ENCODE measurements at regions of chr22 and their contacts with region 1.

Region 1: DNA sequence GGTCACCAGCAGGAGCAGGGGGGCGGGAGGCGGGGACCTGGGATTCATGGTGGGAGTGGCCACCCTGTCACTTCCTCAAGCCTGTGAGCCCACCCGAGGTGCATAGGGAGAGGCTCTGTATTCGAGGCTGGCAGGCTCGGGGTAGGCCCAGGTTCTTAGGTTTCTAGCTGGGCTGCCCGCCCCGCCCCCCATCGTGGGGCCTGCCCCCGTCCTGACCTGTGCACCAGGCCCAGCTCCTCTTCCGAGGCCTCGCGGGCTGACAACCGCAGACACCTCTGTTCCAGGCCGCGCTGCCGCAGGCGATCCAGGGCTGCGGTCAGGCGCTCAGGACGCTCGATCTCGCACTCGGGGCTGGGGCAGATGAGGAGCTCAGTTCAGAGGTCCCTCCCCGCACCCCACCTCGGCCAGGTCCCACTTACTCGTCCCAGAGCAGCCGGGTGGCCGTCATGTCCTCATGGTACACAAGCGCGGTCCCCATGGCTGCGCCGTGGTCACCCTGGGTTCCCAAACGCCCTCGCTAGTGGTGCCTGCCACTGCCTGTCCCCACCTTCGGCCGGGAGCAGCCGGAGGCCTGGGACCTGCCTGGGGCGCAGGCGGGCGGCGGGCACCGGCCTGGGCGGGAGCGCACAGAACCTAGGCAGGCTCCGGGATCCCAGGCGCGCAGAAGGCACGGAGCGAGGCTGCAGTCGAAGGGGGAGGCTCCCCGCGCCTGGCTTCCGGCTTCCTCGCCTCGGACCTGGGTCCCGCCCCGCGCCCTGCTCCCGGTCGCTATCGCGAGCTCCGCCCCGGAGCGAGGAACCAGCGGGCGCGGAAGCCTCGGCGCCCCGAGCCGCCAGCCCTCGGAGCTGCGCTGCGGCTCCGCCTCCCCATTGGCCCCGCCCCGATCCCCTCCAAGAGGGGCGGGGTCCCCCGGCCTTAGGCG is at the start of gene HDAC10:
- DNase-seq: peak; percentile 72 to 83
- H3K4me3 ChIP-seq: peak within 1 kb of the TSS; percentile 84
- H3K27ac ChIP-seq: peak within 1 kb of the TSS; percentile 37
- H3K4me1 ChIP-seq: peaks cover 22% of the 10 kb centered on the region
- H3K27me3 ChIP-seq: no peaks in the 10 kb centered on the region
- CTCF ChIP-seq: 0 out of 2 replicates have a peak, but pooled peaks have one; percentile 19
- total RNA-seq, gene HDAC10: 80.5 and 101 TPM in 2 replicates

Region 2: DNA sequence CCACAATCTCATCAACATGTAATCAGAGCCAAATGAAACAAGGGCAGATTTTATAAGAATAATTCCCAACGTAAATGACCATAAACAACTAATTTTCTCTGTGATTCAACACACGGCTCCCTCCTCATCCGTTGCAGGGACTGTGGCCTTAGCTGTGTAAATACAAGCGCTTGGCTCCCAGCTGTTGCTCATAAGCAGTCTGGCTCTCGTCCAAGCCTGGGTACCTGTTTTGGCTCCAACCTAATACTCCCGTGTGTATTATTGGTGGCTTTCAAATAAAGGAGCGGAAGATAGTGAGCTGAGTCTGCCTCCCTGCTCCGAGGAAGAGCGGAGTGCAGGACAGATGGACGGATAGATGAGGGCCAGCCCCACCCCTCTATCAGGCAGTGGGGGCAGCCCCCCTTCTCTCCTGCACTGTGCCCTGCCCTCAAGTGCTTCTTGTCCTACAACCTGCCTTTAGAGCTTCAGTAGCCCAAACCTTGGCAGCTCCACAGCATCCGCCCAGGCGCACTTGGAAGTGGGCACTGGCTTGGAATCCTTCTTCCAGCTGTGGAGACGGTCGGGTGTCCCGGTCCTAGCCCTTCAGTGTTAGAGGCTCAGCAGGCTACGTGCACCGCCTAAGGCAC is 1094.0 kb before region 1 on chr22:
- CTCF ChIA-PET with region 1: no interaction called
- POLR2A ChIA-PET with region 1: no interaction called
- intact Hi-C with region 1: no loop called
- DNase-seq: no peak
- H3K4me3 ChIP-seq: no peak overlapping the region
- H3K27ac ChIP-seq: no peak overlapping the region
- H3K4me1 ChIP-seq: no peaks in the 10 kb centered on the region
- H3K27me3 ChIP-seq: peaks cover 98% of the 10 kb centered on the region
- CTCF ChIP-seq: no peak

Region 3: GRCh38 chr22:50169774-50170341 is 81.0 kb before region 1 on chr22:
- CTCF ChIA-PET with region 1: no interaction called
- POLR2A ChIA-PET with region 1: no interaction called
- intact Hi-C with region 1: no loop called
- DNase-seq: peak; percentile 46 to 62
- H3K4me3 ChIP-seq: peak overlapping the region; percentile 56; the same call in 1 of the 2 replicates
- H3K27ac ChIP-seq: no peak overlapping the region
- H3K4me1 ChIP-seq: peaks cover 13% of the 10 kb centered on the region
- H3K27me3 ChIP-seq: no peaks in the 10 kb centered on the region
- CTCF ChIP-seq: no peak

Region 4: GRCh38 chr22:50311606-50312351 is 61.0 kb after region 1 on chr22:
- CTCF ChIA-PET with region 1: no interaction called
- POLR2A ChIA-PET with region 1: no interaction called
- intact Hi-C with region 1: no loop called
- DNase-seq: no peak
- H3K4me3 ChIP-seq: no peak overlapping the region
- H3K27ac ChIP-seq: no peak overlapping the region
- H3K4me1 ChIP-seq: peaks cover 13% of the 10 kb centered on the region
- H3K27me3 ChIP-seq: no peaks in the 10 kb centered on the region
- CTCF ChIP-seq: no peak

Region 5: DNA sequence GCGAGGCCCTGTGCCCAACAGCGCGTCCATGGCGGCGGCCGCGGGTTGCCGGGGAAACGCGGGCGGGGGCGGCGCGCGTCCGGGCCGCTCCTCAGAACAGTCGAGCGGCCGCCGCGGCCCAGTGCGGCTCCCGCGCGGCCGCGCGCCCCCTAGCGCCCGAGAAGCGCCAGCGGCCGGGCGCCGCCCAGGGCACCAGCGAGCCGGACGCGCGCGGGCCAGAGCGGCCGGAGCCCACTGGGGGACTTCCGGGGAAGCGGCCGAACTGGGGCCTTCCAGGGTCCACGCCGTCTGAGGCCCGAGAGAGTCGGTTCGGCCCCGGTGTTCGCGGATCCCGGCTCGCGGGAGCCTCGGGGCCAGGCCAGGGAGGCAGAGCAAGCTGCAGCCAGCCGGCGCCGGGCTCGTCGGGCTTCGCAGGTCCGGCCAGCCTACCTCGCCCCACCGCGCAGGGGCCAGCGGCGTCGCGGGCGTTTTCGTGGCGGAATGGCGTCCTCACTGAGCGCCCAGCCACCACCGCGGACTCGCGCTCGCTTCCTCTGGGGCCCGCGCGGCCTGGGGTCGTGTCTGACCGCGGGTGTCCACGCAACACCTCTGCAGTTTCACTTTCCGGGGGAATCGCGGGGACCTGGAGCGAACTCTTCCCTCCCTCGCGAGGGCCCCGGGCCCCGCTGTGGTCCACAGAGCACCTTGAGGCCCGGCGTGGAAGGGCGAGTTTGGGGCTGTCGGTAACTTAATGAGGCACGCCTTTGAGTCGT is 76.3 kb after region 1 on chr22 and contains the start of gene DENND6B:
- CTCF ChIA-PET with region 1: no interaction called
- POLR2A ChIA-PET with region 1: no interaction called
- intact Hi-C with region 1: loop called (anchors 2 kb)
- DNase-seq: peak; percentile 62 to 80
- H3K4me3 ChIP-seq: peak within 1 kb of the TSS; percentile 92
- H3K27ac ChIP-seq: peak within 1 kb of the TSS; percentile 46
- H3K4me1 ChIP-seq: peaks cover 33% of the 10 kb centered on the region
- H3K27me3 ChIP-seq: no peaks in the 10 kb centered on the region
- CTCF ChIP-seq: peak; percentile 61
- total RNA-seq, gene DENND6B: 12.1 and 14.3 TPM in 2 replicates

Region 6: GRCh38 chr22:50361688-50362087 is 110.9 kb after region 1 on chr22:
- CTCF ChIA-PET with region 1: interaction called, 24 read pairs
- POLR2A ChIA-PET with region 1: no interaction called
- intact Hi-C with region 1: no loop called
- DNase-seq: no peak
- H3K4me3 ChIP-seq: no peak overlapping the region
- H3K27ac ChIP-seq: no peak overlapping the region
- H3K4me1 ChIP-seq: no peaks in the 10 kb centered on the region
- H3K27me3 ChIP-seq: no peaks in the 10 kb centered on the region
- CTCF ChIP-seq: no peak

Region 7: DNA sequence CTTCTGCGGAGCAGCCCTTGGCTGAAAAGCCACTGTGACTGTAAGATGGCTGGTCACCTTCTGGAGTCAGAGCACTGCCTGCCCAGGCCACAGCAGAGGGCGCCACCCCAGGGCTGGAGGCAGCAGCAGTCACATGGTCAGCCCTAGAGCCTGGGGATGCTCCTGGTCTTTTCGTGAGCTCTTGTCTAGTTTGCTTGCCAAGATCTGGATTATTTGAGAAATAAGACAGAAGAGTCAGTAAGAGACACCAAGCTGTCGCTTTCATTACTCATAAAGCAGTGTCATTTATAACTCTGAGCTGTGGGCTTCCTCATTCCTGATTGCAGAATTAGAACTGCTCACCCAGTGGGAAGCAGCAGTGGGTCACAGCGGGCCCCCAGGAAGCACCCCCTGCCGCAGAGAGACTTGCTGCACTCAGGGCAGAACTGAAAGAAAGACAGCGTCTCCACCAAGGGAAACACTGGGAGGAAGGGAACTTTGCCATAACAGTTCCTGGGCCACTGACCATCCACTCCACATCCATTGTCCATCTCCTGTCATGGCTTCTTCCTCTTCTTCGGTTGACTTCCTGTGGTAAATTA is 149.0 kb after region 1 on chr22:
- CTCF ChIA-PET with region 1: no interaction called
- POLR2A ChIA-PET with region 1: no interaction called
- intact Hi-C with region 1: no loop called
- DNase-seq: peak in 1 of 2 experiments; percentile 32
- H3K4me3 ChIP-seq: no peak overlapping the region
- H3K27ac ChIP-seq: no peak overlapping the region
- H3K4me1 ChIP-seq: peaks cover 5% of the 10 kb centered on the region; the same call in 1 of the 2 replicates
- H3K27me3 ChIP-seq: no peaks in the 10 kb centered on the region
- CTCF ChIP-seq: peak; percentile 63